Activated CD4-positive, alpha-beta memory T cell treated with anti-CD3 and anti-CD28 coated beads, Interleukin-2, amount 10 ng/mL, durations not matched to agents 7 days and 5 days (primary cell): ENCODE measurements at regions of chr7 and their contacts with region 1.

Region 1: GRCh38 chr7:129224251-129225205 is at the start of gene AHCYL2:
- DNase-seq: peak; percentile 98
- H3K4me3 Mint-ChIP-seq: peak within 1 kb of the TSS; percentile 87
- H3K27ac Mint-ChIP-seq: peak within 1 kb of the TSS; percentile 90
- H3K4me1 Mint-ChIP-seq: peaks cover 31% of the 10 kb centered on the region
- H3K27me3 Mint-ChIP-seq: no peaks in the 10 kb centered on the region
- total RNA-seq, gene AHCYL2: 18.5 to 21.0 TPM

Region 2: DNA sequence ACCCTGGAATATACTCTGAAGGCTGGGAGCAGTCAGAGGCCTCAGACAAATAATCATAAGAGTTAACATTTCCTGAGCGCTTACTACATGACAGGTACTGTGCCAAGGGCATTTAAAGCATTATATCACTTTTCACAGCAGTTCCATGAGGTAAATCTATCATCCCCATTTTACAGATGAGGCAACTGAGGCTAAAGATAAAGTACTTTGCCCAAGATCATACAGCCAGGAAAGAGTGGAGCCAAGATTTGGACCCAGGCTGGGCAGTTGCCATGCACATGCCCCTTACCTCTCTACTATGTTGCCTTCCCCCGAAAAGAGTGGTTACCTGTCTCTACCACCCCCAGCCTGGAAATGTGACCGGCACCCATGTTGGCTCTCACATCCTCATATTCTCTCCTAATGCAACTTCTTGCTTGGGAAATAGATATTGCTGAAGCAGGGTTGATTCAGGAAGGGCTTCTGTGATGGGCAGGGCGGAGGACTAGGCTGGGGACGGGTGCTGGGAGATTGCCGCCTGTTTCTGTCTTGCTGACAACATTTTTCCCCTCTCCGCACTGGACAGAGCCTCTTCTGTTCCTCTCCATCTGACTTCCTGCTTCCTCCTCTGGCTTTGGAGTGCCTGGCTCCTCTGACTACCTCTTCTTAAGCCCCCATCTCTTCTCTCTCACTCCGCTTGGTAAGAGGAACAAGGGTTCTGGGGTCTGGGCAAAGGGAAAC is 22.3 kb before region 1 on chr7:
- CTCF ChIA-PET with region 1: no interaction called
- POLR2A ChIA-PET with region 1: no interaction called
- DNase-seq: no peak
- H3K4me3 Mint-ChIP-seq: no peak overlapping the region
- H3K27ac Mint-ChIP-seq: no peak overlapping the region
- H3K4me1 Mint-ChIP-seq: no peaks in the 10 kb centered on the region
- H3K27me3 Mint-ChIP-seq: peaks cover 13% of the 10 kb centered on the region

Region 3: DNA sequence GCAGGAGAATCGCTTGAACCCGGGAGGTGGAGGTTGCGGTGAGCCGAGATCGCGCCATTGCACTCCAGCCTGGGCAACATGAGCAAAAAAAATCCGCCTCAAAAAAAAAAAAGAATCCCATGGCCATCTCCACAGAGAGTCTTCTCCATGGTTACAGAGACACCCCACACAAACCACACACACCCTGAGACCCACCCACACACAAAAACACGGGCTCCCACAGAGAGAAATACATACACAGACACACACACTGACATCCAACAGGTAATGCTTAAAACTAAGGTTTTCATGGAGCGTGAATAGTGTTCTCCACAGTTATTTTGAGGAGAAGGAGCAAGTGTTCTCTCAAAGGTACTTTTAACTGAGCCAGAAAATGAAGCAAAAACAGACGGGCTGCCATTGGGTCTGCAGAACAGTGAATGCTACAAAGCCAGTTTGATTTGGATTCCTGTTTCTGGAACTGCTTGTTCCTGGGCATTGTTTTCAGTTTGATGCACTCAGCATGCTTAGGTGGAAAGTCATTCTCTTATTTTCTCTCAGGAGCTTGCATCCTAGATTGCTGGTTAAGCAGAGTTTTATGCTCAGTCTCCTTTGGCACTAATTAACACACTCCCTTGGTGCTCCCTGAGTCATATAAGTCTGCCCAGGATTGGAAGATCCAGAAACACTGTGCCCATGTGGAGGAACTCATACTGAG is 15.7 kb after region 1 on chr7:
- CTCF ChIA-PET with region 1: no interaction called
- POLR2A ChIA-PET with region 1: no interaction called
- DNase-seq: no peak
- H3K4me3 Mint-ChIP-seq: no peak overlapping the region
- H3K27ac Mint-ChIP-seq: no peak overlapping the region
- H3K4me1 Mint-ChIP-seq: no peaks in the 10 kb centered on the region
- H3K27me3 Mint-ChIP-seq: no peaks in the 10 kb centered on the region

Region 4: GRCh38 chr7:129298268-129298893 is 73.9 kb after region 1 on chr7:
- CTCF ChIA-PET with region 1: interaction called, 127 read pairs
- POLR2A ChIA-PET with region 1: no interaction called
- DNase-seq: peak; percentile 59
- H3K4me3 Mint-ChIP-seq: no peak overlapping the region
- H3K27ac Mint-ChIP-seq: no peak overlapping the region
- H3K4me1 Mint-ChIP-seq: no peaks in the 10 kb centered on the region
- H3K27me3 Mint-ChIP-seq: no peaks in the 10 kb centered on the region

Region 5: GRCh38 chr7:129394982-129395914 is 170.7 kb after region 1 on chr7:
- CTCF ChIA-PET with region 1: no interaction called
- POLR2A ChIA-PET with region 1: no interaction called
- DNase-seq: no peak
- H3K4me3 Mint-ChIP-seq: no peak overlapping the region
- H3K27ac Mint-ChIP-seq: no peak overlapping the region
- H3K4me1 Mint-ChIP-seq: peaks cover 1% of the 10 kb centered on the region
- H3K27me3 Mint-ChIP-seq: no peaks in the 10 kb centered on the region